Mucosa of descending colon (tissue), 3 donors: ENCODE measurements at regions of chr20 and their contacts with region 1.

Region 1: GRCh38 chr20:63009045-63009961 is 2.5 kb upstream of the BHLHE23 start:
- DNase-seq: peak; percentile 78 to 87 (median 84)
- ATAC-seq: peak; percentile 89
- H3K4me3 ChIP-seq: no peak overlapping the region
- H3K4me1 ChIP-seq: peaks cover 8% of the 10 kb centered on the region
- CTCF ChIP-seq: peak; percentile 82

Region 2: GRCh38 chr20:62875419-62876361 is 133.6 kb before region 1 on chr20:
- intact Hi-C with region 1: loop called in 1 of 2 experiments (anchors 10 kb)
- DNase-seq: peak; percentile 61 to 80 (median 76)
- ATAC-seq: peak; percentile 96
- H3K4me3 ChIP-seq: no peak overlapping the region
- H3K4me1 ChIP-seq: no peaks in the 10 kb centered on the region
- CTCF ChIP-seq: peak; percentile 24

Region 3: GRCh38 chr20:62972270-62973032 is 36.9 kb before region 1 on chr20:
- intact Hi-C with region 1: loop called in 1 of 2 experiments (anchors 2 kb)
- DNase-seq: peak; percentile 84 to 92 (median 91)
- ATAC-seq: peak; percentile 97
- H3K4me3 ChIP-seq: no peak overlapping the region
- H3K4me1 ChIP-seq: peaks cover 6% of the 10 kb centered on the region
- CTCF ChIP-seq: peak; percentile 81

Region 4: DNA sequence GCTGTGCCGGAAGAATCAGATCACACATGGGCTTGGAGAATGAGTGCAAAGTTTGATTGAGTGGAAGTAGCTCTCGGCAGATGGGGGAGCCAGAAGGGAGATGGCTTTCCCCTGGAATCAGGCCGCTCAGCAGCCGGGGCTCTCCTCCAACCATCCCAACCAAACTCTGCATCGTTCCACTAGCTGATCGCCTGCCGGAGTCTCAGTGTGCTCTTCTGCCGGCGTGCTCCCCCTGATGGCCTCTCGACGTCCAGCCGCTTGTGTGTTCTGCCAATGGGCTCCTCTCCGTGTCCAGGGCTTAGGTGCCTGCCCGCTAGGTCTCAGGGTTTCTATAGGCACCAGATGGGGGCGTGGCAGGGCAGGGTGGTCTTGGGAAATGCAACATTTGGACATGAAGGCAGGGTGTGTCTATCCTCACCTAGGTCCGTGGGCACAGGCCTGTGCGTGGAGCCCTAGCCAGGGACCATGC is 221.5 kb after region 1 on chr20:
- intact Hi-C with region 1: no loop called
- DNase-seq: peak in 2 of 3 donors; percentile 49 to 56
- ATAC-seq: peak; percentile 70
- H3K4me3 ChIP-seq: no peak overlapping the region
- H3K4me1 ChIP-seq: no peaks in the 10 kb centered on the region
- CTCF ChIP-seq: no peak